GM12878 (cell line): ENCODE measurements at regions of chr9 and their contacts with region 1.

Region 1: DNA sequence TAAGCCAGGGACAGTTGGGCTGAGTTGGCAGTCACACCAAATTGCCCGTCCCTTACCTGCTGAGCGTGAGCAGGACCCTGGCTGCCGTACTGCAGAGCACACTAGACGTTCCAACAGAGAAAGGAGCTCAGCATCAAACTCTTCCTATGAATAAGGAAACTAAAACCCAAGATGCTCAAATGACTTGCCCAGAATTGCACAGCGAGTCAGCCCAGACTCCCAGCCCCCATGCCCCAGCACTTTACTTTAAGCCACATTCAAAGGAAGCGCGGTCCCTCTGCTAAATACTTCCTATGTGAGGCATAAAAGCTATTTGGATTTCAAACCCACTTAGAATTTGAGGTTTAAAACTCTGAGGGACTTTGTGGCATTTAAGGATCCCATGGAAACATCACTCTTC is 23.9 kb downstream of the PAX5 start:
- DNase-seq: no peak
- ATAC-seq: peak; percentile 38
- H3K4me3 ChIP-seq: peak overlapping the region; percentile 61
- H3K27ac ChIP-seq: peak overlapping the region; percentile 83
- H3K4me1 ChIP-seq: peaks cover 76% of the 10 kb centered on the region
- H3K27me3 ChIP-seq: no peaks in the 10 kb centered on the region
- CTCF ChIP-seq: no peak
- EP300 ChIP-seq: no peak
- POLR2A ChIP-seq: 0 out of 2 replicates have a peak, but pooled peaks have one; percentile 38
- RAD21 ChIP-seq: no peak

Region 2: DNA sequence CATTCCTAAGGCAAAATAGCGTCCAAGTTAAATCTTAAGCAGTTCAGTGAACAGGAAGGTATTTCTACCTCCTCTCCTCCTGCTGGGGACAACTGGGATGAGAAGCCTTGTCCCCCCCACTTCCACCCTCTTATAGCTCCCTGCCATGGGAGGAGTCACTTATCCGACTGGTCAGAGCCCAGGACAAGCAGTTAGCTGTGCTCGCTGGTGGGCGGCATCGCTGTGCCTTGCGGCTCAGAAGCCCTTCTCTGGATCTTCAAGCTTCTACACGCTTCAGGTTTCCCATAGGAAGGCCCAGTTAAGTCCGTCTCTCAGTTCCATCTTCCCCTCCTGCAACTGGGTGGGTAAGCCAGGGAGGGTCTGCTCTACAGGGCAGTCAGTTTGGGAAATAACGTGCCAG is 53.3 kb before region 1 on chr9:
- CTCF ChIA-PET with region 1: no interaction called
- POLR2A ChIA-PET with region 1: no interaction called
- RAD21 ChIA-PET with region 1: no interaction called
- SMC1A ChIA-PET with region 1: no interaction called
- in situ Hi-C with region 1: loop called (anchors 10 kb)
- intact Hi-C with region 1: no loop called
- DNase-seq: no peak
- ATAC-seq: no peak
- H3K4me3 ChIP-seq: no peak overlapping the region
- H3K27ac ChIP-seq: no peak overlapping the region
- H3K4me1 ChIP-seq: no peaks in the 10 kb centered on the region
- H3K27me3 ChIP-seq: no peaks in the 10 kb centered on the region
- CTCF ChIP-seq: no peak
- EP300 ChIP-seq: no peak
- POLR2A ChIP-seq: no peak
- RAD21 ChIP-seq: no peak

Region 3: GRCh38 chr9:37104183-37104889 is 94.2 kb after region 1 on chr9:
- CTCF ChIA-PET with region 1: no interaction called
- POLR2A ChIA-PET with region 1: no interaction called
- RAD21 ChIA-PET with region 1: no interaction called
- SMC1A ChIA-PET with region 1: no interaction called
- in situ Hi-C with region 1: no loop called
- intact Hi-C with region 1: no loop called
- DNase-seq: no peak
- ATAC-seq: peak; percentile 47; the same call in 2 of the 3 replicates
- H3K4me3 ChIP-seq: no peak overlapping the region
- H3K27ac ChIP-seq: no peak overlapping the region
- H3K4me1 ChIP-seq: peaks cover 3% of the 10 kb centered on the region; the same call in 1 of the 2 replicates
- H3K27me3 ChIP-seq: no peaks in the 10 kb centered on the region
- CTCF ChIP-seq: no peak
- EP300 ChIP-seq: no peak
- POLR2A ChIP-seq: no peak
- RAD21 ChIP-seq: no peak